ENCODE measurements at regions of chr11 and their contacts with region 1.

Region 1: DNA sequence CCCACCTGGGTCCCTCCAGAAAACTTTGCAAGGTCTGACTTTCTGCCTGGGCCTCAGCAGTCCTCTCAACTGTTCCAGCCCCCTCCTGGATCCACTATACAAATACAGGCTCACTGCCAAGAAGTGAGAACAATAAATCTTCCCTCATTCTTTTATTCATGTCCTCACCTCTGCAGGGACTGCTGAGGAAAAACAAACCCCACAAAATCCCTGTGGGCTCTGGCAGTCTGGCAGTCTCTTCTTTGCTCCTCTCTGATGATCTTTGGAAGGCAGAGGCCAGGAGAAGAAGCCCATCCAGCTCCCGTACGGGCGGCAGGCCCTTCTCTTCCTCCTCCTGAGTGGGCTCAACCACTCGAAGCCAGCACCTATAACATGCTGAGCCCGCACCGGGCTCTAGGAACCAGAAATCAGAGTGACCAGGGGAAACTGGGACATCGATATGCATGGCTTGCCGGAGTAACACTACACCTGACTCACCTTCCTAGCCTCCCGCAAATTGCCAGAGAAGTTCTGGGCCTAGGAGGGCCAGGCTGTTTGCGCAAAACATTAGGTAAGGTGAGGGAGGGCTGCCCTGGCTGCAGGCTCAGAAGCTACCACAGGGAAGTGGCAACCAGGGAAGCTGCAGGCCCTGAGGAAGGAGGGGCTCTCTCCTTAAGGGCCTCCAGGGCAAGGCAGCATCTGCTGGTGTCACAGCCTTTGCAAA is 24.2 kb downstream of the TMPRSS5 start:
- DNase-seq: no peak
- H3K4me3 ChIP-seq: no peak overlapping the region
- CTCF ChIP-seq: no peak
- POLR2A ChIP-seq: no peak

Region 2: GRCh38 chr11:113603277-113604059 is 78.4 kb before region 1 on chr11:
- intact Hi-C with region 1: no loop called
- DNase-seq: no peak
- H3K4me3 ChIP-seq: no peak overlapping the region
- CTCF ChIP-seq: no peak
- POLR2A ChIP-seq: no peak

Region 3: GRCh38 chr11:114774599-114775361 is 1092.9 kb after region 1 on chr11:
- intact Hi-C with region 1: loop called (anchors 5 kb)
- DNase-seq: no peak
- H3K4me3 ChIP-seq: no peak overlapping the region
- CTCF ChIP-seq: no peak
- POLR2A ChIP-seq: no peak

Measured in lower leg skin (tissue), 4 donors.